GM12878 (cell line): ENCODE measurements at regions of chr9 and their contacts with region 1.

Region 1: GRCh38 chr9:125631391-125632085 is 75.5 kb downstream of the MAPKAP1 start:
- DNase-seq: no peak
- ATAC-seq: peak; percentile 49
- H3K4me3 ChIP-seq: peak overlapping the region; percentile 32; the same call in 1 of the 2 replicates
- H3K27ac ChIP-seq: peak overlapping the region; percentile 98
- H3K4me1 ChIP-seq: peaks cover 75% of the 10 kb centered on the region
- H3K27me3 ChIP-seq: no peaks in the 10 kb centered on the region
- CTCF ChIP-seq: peak; percentile 69 to 74 (median 70)
- EP300 ChIP-seq: no peak
- POLR2A ChIP-seq: no peak
- RAD21 ChIP-seq: peak; percentile 92

Region 2: GRCh38 chr9:124725068-124725452 is 906.5 kb before region 1 on chr9:
- CTCF ChIA-PET with region 1: no interaction called
- POLR2A ChIA-PET with region 1: no interaction called
- RAD21 ChIA-PET with region 1: no interaction called
- SMC1A ChIA-PET with region 1: no interaction called
- in situ Hi-C with region 1: no loop called
- intact Hi-C with region 1: no loop called
- DNase-seq: no peak
- ATAC-seq: no peak
- H3K4me3 ChIP-seq: no peak overlapping the region
- H3K27ac ChIP-seq: no peak overlapping the region
- H3K4me1 ChIP-seq: no peaks in the 10 kb centered on the region
- H3K27me3 ChIP-seq: no peaks in the 10 kb centered on the region
- CTCF ChIP-seq: no peak
- EP300 ChIP-seq: no peak
- POLR2A ChIP-seq: no peak
- RAD21 ChIP-seq: no peak

Region 3: GRCh38 chr9:124861342-124862229 is 770.0 kb before region 1 on chr9 and contains the starts of genes ARPC5L and RPL35:
- CTCF ChIA-PET with region 1: no interaction called
- POLR2A ChIA-PET with region 1: no interaction called
- RAD21 ChIA-PET with region 1: no interaction called
- SMC1A ChIA-PET with region 1: no interaction called
- in situ Hi-C with region 1: no loop called
- intact Hi-C with region 1: loop called (anchors 10 kb)
- DNase-seq: peak; percentile 80
- ATAC-seq: peak; percentile 95
- H3K4me3 ChIP-seq: peak within 1 kb of the TSS; percentile 95
- H3K27ac ChIP-seq: peak within 1 kb of the TSS; percentile 83
- H3K4me1 ChIP-seq: peaks cover 13% of the 10 kb centered on the region
- H3K27me3 ChIP-seq: no peaks in the 10 kb centered on the region
- CTCF ChIP-seq: peak; percentile 5 to 16 (median 15); a peak in 2 of 6 replicates
- EP300 ChIP-seq: no peak
- POLR2A ChIP-seq: peak; percentile 99
- RAD21 ChIP-seq: no peak
- polyA plus RNA-seq, gene ARPC5L: 42.3 to 121 TPM
- polyA plus RNA-seq, gene RPL35: 5,281 to 6,300 TPM

Region 4: DNA sequence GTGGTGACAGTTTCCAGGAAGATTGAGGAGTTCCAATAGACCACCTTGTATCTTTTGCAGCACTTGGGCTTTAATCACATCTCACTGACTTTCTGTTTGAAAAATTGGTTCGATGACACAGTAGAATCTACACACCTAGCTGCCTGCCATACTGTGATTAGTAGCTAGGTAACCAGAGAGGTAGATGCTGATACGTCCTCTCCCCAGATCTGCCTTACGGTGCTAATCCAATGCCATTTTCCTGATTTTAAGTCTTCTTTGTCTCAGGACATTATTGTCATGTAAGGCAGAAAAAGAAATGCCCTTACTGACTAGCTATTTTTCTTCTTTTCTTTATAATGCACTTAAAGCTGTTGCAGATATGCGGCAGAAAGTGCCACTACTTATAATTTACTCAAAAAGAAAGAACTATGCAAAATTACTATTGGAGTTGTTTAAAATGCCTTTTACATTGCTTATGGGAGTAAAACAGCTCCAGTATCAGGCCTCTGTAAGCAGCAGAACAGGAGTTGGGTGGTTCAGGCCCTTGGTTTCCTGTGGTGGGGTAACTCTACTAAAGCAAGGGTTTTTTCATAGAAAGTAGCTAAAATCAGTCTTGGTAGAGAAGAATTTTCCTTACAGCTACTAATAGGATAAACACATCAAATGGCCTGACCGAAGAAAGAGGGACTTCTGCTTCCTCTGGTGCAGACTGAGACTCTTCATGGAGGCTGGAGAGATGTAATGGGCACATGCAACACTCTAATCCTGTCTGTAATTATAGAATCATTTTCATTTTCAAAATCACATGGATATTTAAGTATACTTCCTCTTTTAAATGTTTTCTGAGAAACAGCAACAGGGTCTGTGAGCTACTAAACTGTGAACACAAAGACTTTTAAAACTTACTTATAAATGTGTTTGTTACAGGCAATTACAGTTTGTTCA is 101.7 kb before region 1 on chr9:
- CTCF ChIA-PET with region 1: interaction called, 3 read pairs
- POLR2A ChIA-PET with region 1: no interaction called
- RAD21 ChIA-PET with region 1: interaction called, 11 read pairs
- SMC1A ChIA-PET with region 1: interaction called, 5 read pairs
- in situ Hi-C with region 1: no loop called
- intact Hi-C with region 1: no loop called
- DNase-seq: peak; percentile 57
- ATAC-seq: peak; percentile 91
- H3K4me3 ChIP-seq: no peak overlapping the region; the same call in 1 of the 2 replicates
- H3K27ac ChIP-seq: peak overlapping the region; percentile 75
- H3K4me1 ChIP-seq: peaks cover 30% of the 10 kb centered on the region
- H3K27me3 ChIP-seq: no peaks in the 10 kb centered on the region
- CTCF ChIP-seq: no peak
- EP300 ChIP-seq: no peak
- POLR2A ChIP-seq: no peak
- RAD21 ChIP-seq: no peak

Region 5: GRCh38 chr9:125663127-125663526 is 31.6 kb after region 1 on chr9:
- CTCF ChIA-PET with region 1: interaction called, 4 read pairs
- POLR2A ChIA-PET with region 1: interaction called, 5 read pairs
- RAD21 ChIA-PET with region 1: interaction called, 7 read pairs
- SMC1A ChIA-PET with region 1: interaction called, 19 read pairs
- in situ Hi-C with region 1: no loop called
- intact Hi-C with region 1: no loop called
- DNase-seq: no peak
- ATAC-seq: peak; percentile 36
- H3K4me3 ChIP-seq: no peak overlapping the region
- H3K27ac ChIP-seq: peak overlapping the region; percentile 22; the same call in 1 of the 2 replicates
- H3K4me1 ChIP-seq: peaks cover 21% of the 10 kb centered on the region
- H3K27me3 ChIP-seq: no peaks in the 10 kb centered on the region
- CTCF ChIP-seq: no peak
- EP300 ChIP-seq: no peak
- POLR2A ChIP-seq: no peak
- RAD21 ChIP-seq: no peak

Region 6: DNA sequence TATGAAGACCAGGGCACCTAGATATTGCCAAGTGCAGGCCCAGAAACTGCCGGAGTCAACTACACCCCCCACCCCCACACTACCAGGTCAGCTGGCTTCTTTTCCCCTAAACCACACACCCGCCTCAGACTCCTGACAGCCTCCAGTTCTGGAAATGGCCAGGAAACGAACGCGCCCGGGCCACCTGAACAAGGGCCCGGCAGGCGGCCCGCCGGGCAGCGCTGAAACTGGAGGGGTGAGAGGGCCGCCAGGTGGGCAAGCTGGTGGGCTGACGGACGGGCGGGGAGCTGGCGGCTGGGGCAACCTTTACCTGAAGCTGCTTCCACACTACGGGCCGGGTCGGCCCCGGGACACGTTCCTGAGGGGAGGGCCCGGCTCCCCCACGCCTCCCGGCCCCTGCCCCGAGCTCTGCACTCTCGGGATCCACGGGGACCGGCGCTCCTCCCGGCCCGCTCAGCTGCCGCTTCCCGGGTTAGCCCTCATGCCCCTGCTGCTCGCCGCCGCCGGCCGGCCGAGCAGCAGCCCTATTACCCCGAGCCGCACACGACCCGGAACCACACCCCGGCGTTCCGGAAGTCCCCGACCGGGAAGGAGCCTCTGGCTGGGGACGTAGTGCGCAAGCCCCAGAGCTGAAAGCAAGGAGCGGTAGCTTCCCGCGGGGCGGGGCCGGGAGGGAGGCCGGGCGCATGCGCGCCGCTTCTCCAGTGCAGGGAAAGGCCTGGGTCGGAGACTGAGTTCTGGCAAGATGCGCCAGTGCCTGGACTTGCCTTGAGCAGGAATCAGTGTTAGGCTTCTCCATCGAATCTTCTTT is 75.3 kb after region 1 on chr9 and contains the start of gene MAPKAP1:
- CTCF ChIA-PET with region 1: interaction called, 12 read pairs
- POLR2A ChIA-PET with region 1: interaction called, 17 read pairs
- RAD21 ChIA-PET with region 1: interaction called, 151 read pairs
- SMC1A ChIA-PET with region 1: interaction called, 157 read pairs
- in situ Hi-C with region 1: no loop called
- intact Hi-C with region 1: no loop called
- DNase-seq: peak; percentile 81
- ATAC-seq: peak; percentile 94
- H3K4me3 ChIP-seq: peak within 1 kb of the TSS; percentile 90
- H3K27ac ChIP-seq: peak within 1 kb of the TSS; percentile 69
- H3K4me1 ChIP-seq: peaks cover 17% of the 10 kb centered on the region
- H3K27me3 ChIP-seq: no peaks in the 10 kb centered on the region
- CTCF ChIP-seq: no peak
- EP300 ChIP-seq: no peak
- POLR2A ChIP-seq: peak; percentile 95
- RAD21 ChIP-seq: no peak
- polyA plus RNA-seq, gene MAPKAP1: 5.1 to 11.7 TPM

Region 7: GRCh38 chr9:125820100-125820804 is 188.7 kb after region 1 on chr9:
- CTCF ChIA-PET with region 1: interaction called, 11 read pairs
- POLR2A ChIA-PET with region 1: interaction called, 3 read pairs
- RAD21 ChIA-PET with region 1: interaction called, 11 read pairs
- SMC1A ChIA-PET with region 1: interaction called, 7 read pairs
- in situ Hi-C with region 1: no loop called
- intact Hi-C with region 1: loop called (anchors 2 kb)
- DNase-seq: no peak
- ATAC-seq: peak; percentile 41
- H3K4me3 ChIP-seq: peak overlapping the region; percentile 30; the same call in 1 of the 2 replicates
- H3K27ac ChIP-seq: peak overlapping the region; percentile 56; the same call in 1 of the 2 replicates
- H3K4me1 ChIP-seq: peaks cover 25% of the 10 kb centered on the region
- H3K27me3 ChIP-seq: no peaks in the 10 kb centered on the region
- CTCF ChIP-seq: no peak
- EP300 ChIP-seq: no peak
- POLR2A ChIP-seq: no peak
- RAD21 ChIP-seq: no peak